Activated CD4-positive, alpha-beta T cell treated with anti-CD3 and anti-CD28 coated beads, Interleukin-2, amount 10 ng/mL, durations not matched to agents 7 days and 5 days (primary cell): ENCODE measurements at regions of chr11 and their contacts with region 1.

Region 1: DNA sequence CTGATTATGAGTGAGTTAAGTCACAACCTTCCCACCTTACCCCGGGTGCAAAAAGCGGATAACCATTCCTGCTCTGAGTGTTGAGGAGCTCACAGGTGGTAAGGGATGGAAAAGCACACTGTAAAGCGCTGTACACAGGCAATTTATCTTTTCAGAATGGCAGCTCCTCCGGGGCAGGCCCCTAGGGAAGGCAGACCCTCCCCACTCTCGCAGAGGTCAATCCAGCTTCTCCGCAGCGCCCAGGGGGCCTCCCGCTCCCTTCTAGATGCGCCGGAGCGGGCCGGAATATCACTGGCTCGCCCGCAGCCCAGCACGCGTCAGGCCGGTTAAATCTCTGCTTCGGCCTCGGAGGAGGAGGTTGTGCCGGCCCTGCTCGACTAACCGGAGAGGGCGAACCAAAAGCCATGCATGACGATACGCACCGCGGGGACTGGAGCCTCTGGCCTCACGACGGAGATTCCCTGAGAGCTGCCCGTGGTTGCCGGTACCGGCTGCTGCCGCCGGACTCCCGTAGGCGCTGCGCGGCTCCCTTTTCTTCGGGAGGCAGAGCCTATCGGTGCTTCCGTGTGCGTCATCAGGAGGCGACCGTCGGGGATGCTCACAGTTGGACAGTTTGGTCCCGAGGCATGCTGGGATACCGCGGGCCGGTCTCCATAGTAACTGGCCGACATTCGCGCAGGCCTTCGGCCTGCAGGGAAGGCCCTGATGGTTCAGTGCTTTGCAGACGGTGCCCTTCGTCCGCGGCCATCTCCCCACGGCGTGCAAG is at the start of gene BRMS1:
- DNase-seq: peak; percentile 99
- H3K4me3 Mint-ChIP-seq: peak within 1 kb of the TSS; percentile 97
- H3K27ac Mint-ChIP-seq: peak within 1 kb of the TSS; percentile 94
- H3K4me1 Mint-ChIP-seq: peaks cover 51% of the 10 kb centered on the region
- H3K27me3 Mint-ChIP-seq: peaks cover 4% of the 10 kb centered on the region
- total RNA-seq, gene BRMS1: 47.4 to 48.0 TPM

Region 2: DNA sequence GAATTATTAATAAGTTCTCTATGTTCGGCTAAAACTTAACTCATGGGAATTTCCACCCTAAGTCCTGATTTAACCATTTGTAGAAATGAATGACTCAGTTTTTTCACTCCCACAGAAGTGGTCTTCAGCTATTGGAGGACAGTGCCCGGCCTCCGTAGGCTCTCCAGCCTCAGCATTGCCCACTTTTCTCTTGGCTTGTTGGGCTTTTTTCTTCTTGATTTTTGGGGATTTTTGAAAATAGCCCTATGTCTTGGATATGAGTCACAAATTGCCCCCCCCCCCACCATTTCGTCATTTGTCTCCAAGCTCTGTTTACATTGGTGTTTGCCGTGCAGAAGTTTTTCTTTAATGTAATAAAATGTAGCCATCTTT is 208.0 kb before region 1 on chr11:
- CTCF ChIA-PET with region 1: no interaction called
- POLR2A ChIA-PET with region 1: no interaction called
- DNase-seq: no peak
- H3K4me3 Mint-ChIP-seq: no peak overlapping the region
- H3K27ac Mint-ChIP-seq: no peak overlapping the region
- H3K4me1 Mint-ChIP-seq: peaks cover 33% of the 10 kb centered on the region
- H3K27me3 Mint-ChIP-seq: no peaks in the 10 kb centered on the region

Region 3: DNA sequence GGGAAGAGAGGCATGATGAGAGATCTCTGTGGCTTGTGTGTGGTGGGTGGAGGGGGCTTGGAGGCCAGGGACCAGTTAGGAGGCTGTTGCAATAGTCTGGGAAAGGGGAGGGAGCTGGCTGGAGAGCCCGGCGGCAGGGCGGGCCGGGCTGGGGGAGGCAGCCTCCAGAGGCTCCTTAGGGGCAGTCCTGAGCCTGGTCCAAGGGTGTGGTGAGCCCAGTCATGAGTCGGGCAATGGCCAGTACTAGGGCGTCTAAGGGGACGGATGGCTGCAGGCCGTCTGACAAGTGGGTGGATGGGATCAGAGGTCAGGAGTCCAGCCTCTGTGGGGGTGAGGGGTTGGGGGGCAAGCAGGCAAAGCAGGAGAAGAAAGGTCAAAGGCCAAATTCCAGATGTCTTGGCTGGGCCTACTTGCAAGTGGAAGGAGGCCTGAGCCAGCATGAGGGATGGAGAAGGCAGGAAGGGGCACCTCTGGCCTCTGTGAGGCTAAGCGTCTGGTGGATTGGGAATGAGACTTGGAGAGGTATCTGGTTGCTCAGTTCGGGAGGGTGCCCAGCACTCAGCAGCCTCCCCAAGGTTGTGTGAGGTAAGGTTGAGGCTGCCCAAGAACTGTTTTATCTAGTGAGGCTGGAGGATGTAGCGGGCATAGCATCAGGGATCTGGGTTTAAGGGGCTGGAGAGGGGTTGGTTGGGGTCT is 21.9 kb before region 1 on chr11:
- CTCF ChIA-PET with region 1: no interaction called
- POLR2A ChIA-PET with region 1: no interaction called
- DNase-seq: no peak
- H3K4me3 Mint-ChIP-seq: no peak overlapping the region
- H3K27ac Mint-ChIP-seq: no peak overlapping the region
- H3K4me1 Mint-ChIP-seq: peaks cover 71% of the 10 kb centered on the region
- H3K27me3 Mint-ChIP-seq: no peaks in the 10 kb centered on the region

Region 4: DNA sequence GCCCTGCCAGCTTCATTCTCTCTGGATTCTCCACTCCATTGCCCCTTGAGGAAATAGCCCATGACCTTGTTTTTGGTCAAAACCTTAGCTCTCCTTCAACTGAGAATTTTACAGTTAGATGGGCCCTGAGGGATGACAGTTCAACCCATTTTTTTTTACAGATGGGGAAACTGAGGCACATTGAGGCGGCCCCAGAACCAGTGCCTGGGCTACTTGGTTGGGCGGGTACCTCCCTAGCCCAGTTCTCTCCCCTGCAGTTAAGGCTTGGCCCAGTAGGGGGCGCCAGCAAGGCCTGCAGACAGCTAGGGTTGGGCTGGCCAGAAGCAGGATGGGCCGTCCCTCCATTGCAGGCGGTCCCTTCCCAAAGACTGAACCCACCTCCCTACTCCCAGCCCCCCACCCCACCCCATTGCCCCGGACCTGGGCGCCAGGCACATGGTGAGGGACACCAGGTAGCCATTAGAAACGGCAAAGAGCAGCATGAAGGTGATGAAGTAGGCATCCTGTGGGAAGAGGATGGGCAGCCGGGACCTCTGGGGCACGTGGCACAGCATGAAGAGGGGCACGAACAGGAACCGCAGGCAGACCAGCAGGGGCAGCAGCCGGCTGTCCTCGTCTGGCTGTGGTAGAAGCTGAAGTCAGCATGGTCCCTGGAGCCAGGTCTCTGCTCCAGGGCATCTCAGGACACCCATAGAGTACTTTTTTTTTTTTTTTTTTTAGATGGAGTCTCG is 19.2 kb after region 1 on chr11:
- CTCF ChIA-PET with region 1: interaction called, 10 read pairs
- POLR2A ChIA-PET with region 1: no interaction called
- DNase-seq: peak; percentile 73
- H3K4me3 Mint-ChIP-seq: no peak overlapping the region
- H3K27ac Mint-ChIP-seq: no peak overlapping the region
- H3K4me1 Mint-ChIP-seq: no peaks in the 10 kb centered on the region
- H3K27me3 Mint-ChIP-seq: no peaks in the 10 kb centered on the region

Region 5: GRCh38 chr11:66466225-66467027 is 121.7 kb after region 1 on chr11 and contains the start of gene PELI3:
- CTCF ChIA-PET with region 1: no interaction called
- POLR2A ChIA-PET with region 1: no interaction called
- DNase-seq: peak; percentile 91
- H3K4me3 Mint-ChIP-seq: peak within 1 kb of the TSS; percentile 83
- H3K27ac Mint-ChIP-seq: peak within 1 kb of the TSS; percentile 80
- H3K4me1 Mint-ChIP-seq: peaks cover 42% of the 10 kb centered on the region
- H3K27me3 Mint-ChIP-seq: peaks cover 2% of the 10 kb centered on the region
- total RNA-seq, gene PELI3: 6.7 to 7.2 TPM